ENCODE measurements at regions of chr1 and their contacts with region 1.

Region 1: GRCh38 chr1:116769561-116769977 is 15.3 kb downstream of the CD2 start:
- DNase-seq: peak in 8 of 9 experiments; percentile 44 to 94 (median 76)
- ATAC-seq: peak; percentile 75
- H3K4me3 ChIP-seq: peak overlapping the region in 1 of 2 experiments; percentile 14
- H3K4me3 Mint-ChIP-seq: peak overlapping the region; percentile 55
- H3K27ac ChIP-seq: peak overlapping the region; percentile 42 to 87
- H3K27ac Mint-ChIP-seq: peak overlapping the region; percentile 96
- H3K4me1 ChIP-seq: peaks cover 83% of the 10 kb centered on the region
- H3K4me1 Mint-ChIP-seq: peaks cover 86% of the 10 kb centered on the region
- H3K27me3 ChIP-seq: no peaks in the 10 kb centered on the region
- H3K27me3 Mint-ChIP-seq: no peaks in the 10 kb centered on the region
- CTCF ChIP-seq: no peak

Region 2: DNA sequence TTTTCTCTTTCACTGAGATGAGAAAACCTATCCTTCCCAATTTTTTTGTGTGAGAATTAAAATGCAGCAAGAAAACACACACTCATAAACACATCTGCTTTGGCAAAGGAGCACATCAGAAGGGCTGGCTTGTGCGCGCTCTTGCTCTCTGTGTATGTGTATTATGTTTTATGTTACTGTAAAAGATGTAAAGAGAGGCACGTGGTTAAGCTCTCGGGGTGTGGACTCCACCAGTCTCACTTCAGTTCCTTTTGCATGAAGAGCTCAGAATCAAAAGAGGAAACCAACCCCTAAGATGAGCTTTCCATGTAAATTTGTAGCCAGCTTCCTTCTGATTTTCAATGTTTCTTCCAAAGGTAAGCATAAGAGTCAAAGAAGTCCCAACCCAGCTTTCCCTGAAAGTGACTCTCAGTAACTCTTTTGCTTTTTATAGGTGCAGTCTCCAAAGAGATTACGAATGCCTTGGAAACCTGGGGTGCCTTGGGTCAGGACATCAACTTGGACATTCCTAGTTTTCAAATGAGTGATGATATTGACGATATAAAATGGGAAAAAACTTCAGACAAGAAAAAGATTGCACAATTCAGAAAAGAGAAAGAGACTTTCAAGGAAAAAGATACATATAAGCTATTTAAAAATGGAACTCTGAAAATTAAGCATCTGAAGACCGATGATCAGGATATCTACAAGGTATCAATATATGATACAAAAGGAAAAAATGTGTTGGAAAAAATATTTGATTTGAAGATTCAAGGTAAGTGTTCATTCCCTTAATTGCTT is 15.2 kb before region 1 on chr1 and contains the start of gene CD2:
- CTCF ChIA-PET with region 1: interaction called, 203 read pairs
- POLR2A ChIA-PET with region 1: interaction called, 73 read pairs
- intact Hi-C with region 1: loop called (anchors 1 to 2 kb)
- DNase-seq: peak in 6 of 9 experiments; percentile 43 to 80 (median 60)
- ATAC-seq: peak; percentile 83
- H3K4me3 ChIP-seq: peak within 1 kb of the TSS; percentile 71 to 84
- H3K4me3 Mint-ChIP-seq: peak within 1 kb of the TSS; percentile 93
- H3K27ac ChIP-seq: peak within 1 kb of the TSS; percentile 70 to 87
- H3K27ac Mint-ChIP-seq: peak within 1 kb of the TSS; percentile 99
- H3K4me1 ChIP-seq: peaks cover 23% of the 10 kb centered on the region
- H3K4me1 Mint-ChIP-seq: peaks cover 40% of the 10 kb centered on the region
- H3K27me3 ChIP-seq: no peaks in the 10 kb centered on the region
- H3K27me3 Mint-ChIP-seq: no peaks in the 10 kb centered on the region
- CTCF ChIP-seq: no peak
- total RNA-seq, gene CD2: 97.8 to 102 TPM

Region 3: DNA sequence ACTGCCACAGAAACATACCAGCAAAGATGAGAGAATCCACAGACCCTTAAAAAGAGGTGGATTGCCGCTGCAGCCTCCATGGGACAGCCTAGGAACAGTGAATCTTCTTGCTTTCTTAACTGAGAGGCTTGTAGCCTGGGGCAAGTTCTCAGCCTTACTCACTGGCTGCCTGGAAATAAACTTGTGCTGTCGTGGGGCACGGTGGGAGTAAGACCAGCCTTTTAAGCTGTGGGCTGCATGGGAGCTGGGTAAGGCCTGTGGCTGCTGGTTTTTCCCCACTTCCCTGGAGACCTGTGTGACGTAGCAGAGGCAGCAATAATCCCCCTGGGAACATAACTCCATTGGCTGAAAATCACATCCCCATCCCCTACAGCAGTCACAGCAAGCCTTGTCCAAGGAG is 15.4 kb after region 1 on chr1:
- CTCF ChIA-PET with region 1: interaction called, 10 read pairs
- POLR2A ChIA-PET with region 1: interaction called, 14 read pairs
- intact Hi-C with region 1: no loop called
- DNase-seq: no peak
- ATAC-seq: no peak
- H3K4me3 ChIP-seq: no peak overlapping the region
- H3K4me3 Mint-ChIP-seq: no peak overlapping the region
- H3K27ac ChIP-seq: no peak overlapping the region
- H3K27ac Mint-ChIP-seq: no peak overlapping the region
- H3K4me1 ChIP-seq: no peaks in the 10 kb centered on the region
- H3K4me1 Mint-ChIP-seq: peaks cover 21% of the 10 kb centered on the region
- H3K27me3 ChIP-seq: no peaks in the 10 kb centered on the region
- H3K27me3 Mint-ChIP-seq: no peaks in the 10 kb centered on the region
- CTCF ChIP-seq: no peak

Region 4: GRCh38 chr1:116794804-116795481 is 25.4 kb after region 1 on chr1:
- CTCF ChIA-PET with region 1: interaction called, 4 read pairs
- POLR2A ChIA-PET with region 1: interaction called, 17 read pairs
- intact Hi-C with region 1: no loop called
- DNase-seq: no peak
- ATAC-seq: no peak
- H3K4me3 ChIP-seq: no peak overlapping the region
- H3K4me3 Mint-ChIP-seq: no peak overlapping the region
- H3K27ac ChIP-seq: peak overlapping the region in 1 of 2 experiments; percentile 22
- H3K27ac Mint-ChIP-seq: peak overlapping the region; percentile 50
- H3K4me1 ChIP-seq: peaks cover 26% of the 10 kb centered on the region
- H3K4me1 Mint-ChIP-seq: peaks cover 54% of the 10 kb centered on the region
- H3K27me3 ChIP-seq: no peaks in the 10 kb centered on the region
- H3K27me3 Mint-ChIP-seq: no peaks in the 10 kb centered on the region
- CTCF ChIP-seq: no peak

Region 5: DNA sequence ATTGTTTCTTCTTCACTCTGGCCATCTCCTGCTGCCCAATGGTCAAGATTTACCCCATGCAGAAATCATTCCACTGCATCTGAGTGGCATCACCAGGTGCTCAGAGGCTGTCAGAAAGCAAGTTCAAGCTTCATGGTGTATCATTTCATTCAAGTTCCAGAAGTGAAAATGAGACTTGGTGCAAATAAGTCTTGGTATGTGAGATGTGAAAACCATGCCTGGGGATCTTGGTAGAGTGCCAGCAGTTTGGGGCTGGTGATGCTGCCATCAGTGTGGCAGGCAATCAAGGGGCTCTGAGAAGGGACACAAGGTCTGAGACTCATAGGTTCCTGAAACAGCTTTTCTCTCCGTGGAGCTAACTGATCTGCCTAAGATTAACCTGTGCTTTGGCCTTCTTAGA is 36.7 kb after region 1 on chr1:
- CTCF ChIA-PET with region 1: interaction called, 23 read pairs
- POLR2A ChIA-PET with region 1: interaction called, 44 read pairs
- intact Hi-C with region 1: no loop called
- DNase-seq: peak in 7 of 9 experiments; percentile 37 to 85 (median 62)
- ATAC-seq: peak; percentile 37
- H3K4me3 ChIP-seq: peak overlapping the region in 1 of 2 experiments; percentile 47
- H3K4me3 Mint-ChIP-seq: peak overlapping the region; percentile 71
- H3K27ac ChIP-seq: peak overlapping the region in 1 of 2 experiments; percentile 87
- H3K27ac Mint-ChIP-seq: peak overlapping the region; percentile 94
- H3K4me1 ChIP-seq: peaks cover 52% of the 10 kb centered on the region
- H3K4me1 Mint-ChIP-seq: peaks cover 80% of the 10 kb centered on the region
- H3K27me3 ChIP-seq: no peaks in the 10 kb centered on the region
- H3K27me3 Mint-ChIP-seq: no peaks in the 10 kb centered on the region
- CTCF ChIP-seq: no peak